ENCODE measurements at regions of chr12 and their contacts with region 1.

Region 1: DNA sequence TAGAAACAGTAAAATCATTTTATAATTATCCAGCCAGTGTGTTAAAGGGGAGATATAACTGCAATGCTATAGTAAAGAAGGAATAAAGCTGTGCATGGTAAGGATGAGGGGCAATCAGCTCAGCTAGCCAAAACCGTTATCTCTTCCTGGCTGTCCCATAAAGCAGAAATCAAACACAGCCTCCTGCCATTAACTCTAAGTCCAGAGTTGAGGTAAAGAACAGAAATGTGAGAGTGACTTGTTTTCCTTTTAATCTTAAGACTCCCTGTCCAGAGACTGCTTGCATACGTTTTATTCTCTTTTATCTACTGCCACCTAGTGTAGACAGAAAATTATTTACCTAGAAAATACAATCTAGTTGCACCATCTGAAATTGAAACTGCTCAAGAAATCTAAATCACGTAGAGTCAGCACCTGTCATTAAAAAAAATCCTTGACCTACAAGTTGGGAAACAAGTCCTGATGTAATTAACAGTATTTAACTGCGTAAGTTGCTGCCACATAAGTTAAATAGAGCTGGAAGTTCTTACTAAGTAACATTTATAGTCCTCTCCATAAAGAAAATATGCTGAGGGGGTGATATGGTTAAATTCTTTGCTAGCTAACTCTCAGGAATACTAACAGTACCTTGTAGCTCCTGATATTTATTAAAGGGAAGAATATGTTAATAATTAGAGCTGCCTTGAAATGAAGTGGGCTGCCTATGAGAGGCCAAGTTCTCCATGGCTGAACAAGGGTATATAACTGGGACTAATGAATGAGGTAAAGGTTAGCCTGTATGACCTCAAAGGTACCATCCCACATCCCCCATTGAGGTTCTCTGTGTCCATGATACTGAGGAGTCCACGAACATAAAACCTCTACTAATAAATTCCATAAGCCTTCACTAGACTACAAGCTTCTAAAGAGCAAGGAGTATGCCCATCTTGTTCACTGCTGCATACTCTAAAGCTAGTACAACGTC is 62.7 kb downstream of the GALNT4 start:
- DNase-seq: no peak
- H3K4me3 ChIP-seq: no peak overlapping the region
- H3K27me3 ChIP-seq: no peaks in the 10 kb centered on the region
- CTCF ChIP-seq: peak; percentile 26; the same call in 1 of the 2 replicates

Region 2: DNA sequence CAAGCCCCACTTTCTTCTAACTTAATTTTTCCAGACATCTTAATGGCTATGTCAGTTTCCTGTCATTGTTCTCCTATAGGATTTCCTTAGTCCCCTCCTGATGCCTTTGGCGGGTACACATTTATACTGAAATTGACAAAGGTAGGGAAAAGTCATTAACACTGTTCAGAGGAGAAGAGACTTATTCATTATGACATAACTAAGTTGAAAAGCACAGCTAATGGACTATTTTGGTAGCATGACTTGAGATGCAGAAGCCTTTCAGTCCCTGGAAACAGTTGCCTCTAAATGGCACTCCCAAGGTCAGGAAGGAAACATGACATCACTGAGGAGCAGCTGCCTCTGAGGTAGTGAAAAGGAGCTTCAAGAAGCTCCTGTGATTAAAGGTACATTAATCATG is 564.2 kb before region 1 on chr12:
- CTCF ChIA-PET with region 1: no interaction called
- POLR2A ChIA-PET with region 1: no interaction called
- DNase-seq: no peak
- H3K4me3 ChIP-seq: no peak overlapping the region
- H3K27me3 ChIP-seq: no peaks in the 10 kb centered on the region
- CTCF ChIP-seq: no peak

Region 3: GRCh38 chr12:89019408-89020120 is 442.4 kb before region 1 on chr12:
- CTCF ChIA-PET with region 1: interaction called, 30 read pairs
- POLR2A ChIA-PET with region 1: no interaction called
- DNase-seq: peak; percentile 41
- H3K4me3 ChIP-seq: peak overlapping the region; percentile 34
- H3K27me3 ChIP-seq: no peaks in the 10 kb centered on the region
- CTCF ChIP-seq: peak; percentile 87

Region 4: GRCh38 chr12:89051065-89051677 is 410.8 kb before region 1 on chr12:
- CTCF ChIA-PET with region 1: interaction called, 19 read pairs
- POLR2A ChIA-PET with region 1: no interaction called
- DNase-seq: peak; percentile 23
- H3K4me3 ChIP-seq: no peak overlapping the region
- H3K27me3 ChIP-seq: no peaks in the 10 kb centered on the region
- CTCF ChIP-seq: peak; percentile 86

Region 5: DNA sequence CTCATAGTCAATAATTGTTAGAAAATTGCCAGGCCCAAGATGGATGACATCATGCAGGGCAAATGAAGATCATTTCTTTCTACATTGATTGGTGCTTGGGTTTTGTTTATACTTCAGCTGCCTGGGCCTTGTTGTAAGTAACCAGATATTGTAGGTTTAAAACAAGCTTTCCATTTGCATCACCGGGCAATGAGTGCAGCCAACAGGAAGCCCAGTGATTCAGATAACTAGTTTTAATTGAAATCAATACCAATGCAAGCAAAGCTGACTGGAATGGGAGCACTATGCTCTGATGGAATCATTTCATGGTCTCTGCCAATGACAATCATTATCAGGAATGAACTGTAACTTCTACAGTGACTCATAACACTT is 388.9 kb before region 1 on chr12:
- CTCF ChIA-PET with region 1: no interaction called
- POLR2A ChIA-PET with region 1: no interaction called
- DNase-seq: peak; percentile 35
- H3K4me3 ChIP-seq: no peak overlapping the region
- H3K27me3 ChIP-seq: no peaks in the 10 kb centered on the region
- CTCF ChIP-seq: no peak

Region 6: GRCh38 chr12:89352492-89353187 is 109.3 kb before region 1 on chr12 and contains the start of gene DUSP6:
- CTCF ChIA-PET with region 1: interaction called, 16 read pairs
- POLR2A ChIA-PET with region 1: no interaction called
- DNase-seq: peak; percentile 97
- H3K4me3 ChIP-seq: peak within 1 kb of the TSS; percentile 89
- H3K27me3 ChIP-seq: no peaks in the 10 kb centered on the region
- CTCF ChIP-seq: no peak
- polyA plus RNA-seq, gene DUSP6: 26.6 and 30.8 TPM in 2 replicates

Region 7: GRCh38 chr12:89433634-89434033 is 28.3 kb before region 1 on chr12:
- CTCF ChIA-PET with region 1: no interaction called
- POLR2A ChIA-PET with region 1: no interaction called
- DNase-seq: no peak
- H3K4me3 ChIP-seq: no peak overlapping the region
- H3K27me3 ChIP-seq: no peaks in the 10 kb centered on the region
- CTCF ChIP-seq: no peak

Region 8: GRCh38 chr12:89566630-89567151 is 104.8 kb after region 1 on chr12:
- CTCF ChIA-PET with region 1: no interaction called
- POLR2A ChIA-PET with region 1: no interaction called
- DNase-seq: no peak
- H3K4me3 ChIP-seq: no peak overlapping the region
- H3K27me3 ChIP-seq: no peaks in the 10 kb centered on the region
- CTCF ChIP-seq: no peak

Measured in BJ (cell line).